ENCODE measurements at regions of chr2 and their contacts with region 1.

Region 1: DNA sequence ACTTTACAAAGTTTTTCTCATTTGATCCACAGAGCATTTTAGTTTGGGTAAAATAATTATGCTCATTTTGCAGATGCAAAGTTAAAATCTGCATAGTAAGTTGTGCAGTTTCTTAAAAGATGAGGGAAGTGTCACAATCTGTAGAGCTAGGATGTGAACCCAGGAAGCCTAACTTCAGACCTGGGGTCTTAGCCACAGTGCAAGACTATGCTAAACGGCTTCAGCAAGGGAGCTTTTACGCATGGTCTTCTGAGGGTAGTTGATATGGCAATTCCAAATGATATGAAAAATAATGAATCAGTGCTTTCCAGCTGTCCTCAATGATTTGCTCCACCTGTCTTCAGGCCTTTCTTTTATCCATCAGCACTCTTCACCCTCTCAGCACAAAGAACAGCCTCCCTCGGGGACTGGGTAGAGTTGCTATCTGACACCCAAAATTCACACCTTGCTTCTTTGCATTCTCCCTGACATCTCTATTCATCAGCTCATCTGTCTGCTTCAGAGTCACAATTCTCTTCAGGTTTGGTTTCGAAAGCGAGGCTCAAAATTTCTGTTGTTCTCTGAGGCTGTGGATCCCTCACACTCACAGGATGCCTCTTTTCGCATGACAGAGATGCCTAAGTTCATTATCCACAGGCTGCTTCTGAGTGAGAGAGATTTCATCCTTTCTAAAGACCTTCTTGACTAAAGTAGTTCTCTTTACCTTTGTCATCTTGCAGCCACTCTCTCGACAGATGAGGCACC is 302.5 kb downstream of the NRXN1 start:
- DNase-seq: no peak
- H3K4me3 ChIP-seq: no peak overlapping the region
- H3K27ac ChIP-seq: no peak overlapping the region
- H3K27me3 ChIP-seq: no peaks in the 10 kb centered on the region
- CTCF ChIP-seq: no peak

Region 2: GRCh38 chr2:50746526-50746925 is 17.0 kb after region 1 on chr2:
- CTCF ChIA-PET with region 1: interaction called, 13 read pairs
- POLR2A ChIA-PET with region 1: no interaction called
- DNase-seq: no peak
- H3K4me3 ChIP-seq: no peak overlapping the region
- H3K27ac ChIP-seq: no peak overlapping the region
- H3K27me3 ChIP-seq: no peaks in the 10 kb centered on the region
- CTCF ChIP-seq: peak; percentile 67